ENCODE measurements at regions of chr3 and their contacts with region 1.

Region 1: GRCh38 chr3:70120357-70121121 is 121.0 kb downstream of the SAMMSON start:
- H3K4me3 ChIP-seq: no peak overlapping the region
- H3K27ac ChIP-seq: no peak overlapping the region
- H3K4me1 ChIP-seq: no peaks in the 10 kb centered on the region
- CTCF ChIP-seq: peak; percentile 27; the same call in 1 of the 2 replicates

Region 2: GRCh38 chr3:70108072-70108471 is 12.5 kb before region 1 on chr3:
- CTCF ChIA-PET with region 1: interaction called, 15 read pairs
- POLR2A ChIA-PET with region 1: interaction called, 5 read pairs
- H3K4me3 ChIP-seq: no peak overlapping the region
- H3K27ac ChIP-seq: no peak overlapping the region
- H3K4me1 ChIP-seq: no peaks in the 10 kb centered on the region
- CTCF ChIP-seq: no peak

Region 3: GRCh38 chr3:70137366-70137765 is 16.8 kb after region 1 on chr3:
- CTCF ChIA-PET with region 1: interaction called, 19 read pairs
- POLR2A ChIA-PET with region 1: no interaction called
- H3K4me3 ChIP-seq: no peak overlapping the region
- H3K27ac ChIP-seq: no peak overlapping the region
- H3K4me1 ChIP-seq: no peaks in the 10 kb centered on the region
- CTCF ChIP-seq: no peak